ENCODE measurements at regions of chr22 and their contacts with region 1.

Region 1: DNA sequence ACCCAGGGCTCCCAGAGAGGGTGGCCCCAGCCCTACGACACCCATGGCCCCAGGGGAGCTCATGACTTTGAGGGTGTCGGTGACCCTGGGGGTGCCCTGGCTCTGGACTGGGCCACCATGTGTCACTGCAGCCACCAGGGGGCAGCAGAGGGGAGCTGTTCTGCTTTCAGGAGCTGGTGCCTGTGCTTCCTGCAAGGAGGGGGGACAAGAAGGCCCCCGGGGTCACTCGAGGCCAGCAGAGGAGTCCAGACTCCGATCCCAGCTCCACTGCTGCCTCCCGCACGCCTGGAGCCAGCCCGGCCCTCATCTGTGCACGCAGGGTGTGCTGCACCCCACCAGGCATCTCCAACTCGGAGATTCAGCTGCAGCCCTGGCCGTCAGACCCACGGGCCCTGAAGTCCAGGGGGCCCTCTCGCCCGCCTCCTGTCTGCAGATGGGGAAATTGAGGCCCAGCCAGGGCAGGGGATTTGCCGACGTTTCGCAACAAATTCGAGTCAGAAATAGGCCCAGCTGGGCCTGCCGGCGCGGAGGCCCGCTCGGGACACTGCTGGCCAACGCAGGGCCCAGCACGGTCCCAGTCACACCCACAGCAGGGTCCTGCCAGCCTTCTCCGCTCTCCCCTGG is 29.5 kb upstream of the WNT7B start:
- DNase-seq: peak; percentile 79
- ATAC-seq: peak; percentile 81
- H3K4me3 ChIP-seq: peak overlapping the region; percentile 24 to 73 (median 52); a peak in 5 of 6 replicates
- H3K27ac ChIP-seq: no peak overlapping the region
- H3K4me1 ChIP-seq: peaks cover 24% of the 10 kb centered on the region
- H3K27me3 ChIP-seq: peaks cover 4 to 16% of the 10 kb centered on the region in 2 experiments; a peak in 2 of 5 replicates
- CTCF ChIP-seq: peak; percentile 96
- EP300 ChIP-seq: no peak
- POLR2A ChIP-seq: no peak
- RAD21 ChIP-seq: peak; percentile 95

Region 2: DNA sequence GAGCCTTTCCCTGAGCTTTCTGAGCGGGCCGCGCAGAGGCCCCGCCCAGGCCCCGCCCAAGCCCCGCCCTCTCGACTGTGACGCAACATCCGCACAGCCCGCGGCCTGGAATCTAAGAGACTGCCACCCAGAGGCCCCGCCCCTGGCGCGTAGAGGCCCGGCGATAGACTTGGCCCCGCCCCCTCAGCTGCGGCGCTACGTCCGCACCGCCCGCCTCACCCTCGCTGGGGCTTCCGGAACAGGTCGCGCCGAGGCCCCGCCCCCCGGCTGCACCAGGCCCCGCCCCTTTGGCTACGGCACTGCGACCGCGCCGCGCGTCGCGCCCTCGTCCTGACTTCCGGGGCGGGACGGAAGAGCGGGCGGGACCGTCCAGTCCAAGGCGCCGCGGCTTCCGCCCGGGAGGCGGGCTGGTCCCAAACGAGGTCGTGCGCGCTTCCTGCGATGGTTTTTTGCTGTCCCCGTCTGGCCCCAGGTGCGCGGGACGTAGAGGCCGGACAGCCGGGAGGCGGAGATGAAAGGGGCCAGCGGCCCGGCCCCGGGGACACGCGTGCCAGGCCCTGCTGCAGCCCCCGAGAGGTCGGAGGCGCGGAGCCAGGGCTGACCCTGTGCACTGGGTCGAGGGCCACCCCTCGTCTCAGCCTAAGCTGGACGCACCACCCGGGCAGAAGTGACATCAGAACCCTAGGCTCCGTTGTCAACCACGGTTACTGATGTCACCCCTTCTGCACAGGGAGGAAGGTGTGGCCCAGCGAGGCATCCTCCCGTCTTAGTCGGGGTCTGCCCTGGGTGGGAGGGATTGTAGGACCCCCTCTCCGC is 29.5 kb after region 1 on chr22:
- CTCF ChIA-PET with region 1: interaction called, 4 read pairs
- POLR2A ChIA-PET with region 1: interaction called, 13 read pairs
- in situ Hi-C with region 1: no loop called
- intact Hi-C with region 1: loop called (anchors 1 kb)
- DNase-seq: peak; percentile 95
- ATAC-seq: peak; percentile 93
- H3K4me3 ChIP-seq: peak overlapping the region; percentile 64 to 85 (median 69)
- H3K27ac ChIP-seq: peak overlapping the region; percentile 69
- H3K4me1 ChIP-seq: peaks cover 39% of the 10 kb centered on the region
- H3K27me3 ChIP-seq: peaks cover 3 to 12% of the 10 kb centered on the region in 2 experiments; a peak in 3 of 5 replicates
- CTCF ChIP-seq: no peak
- EP300 ChIP-seq: peak in 1 of 2 experiments; percentile 7; a peak in 1 of 4 replicates
- POLR2A ChIP-seq: peak; percentile 71 to 86
- RAD21 ChIP-seq: no peak

Region 3: GRCh38 chr22:46116491-46116958 is 110.0 kb after region 1 on chr22:
- CTCF ChIA-PET with region 1: interaction called, 92 read pairs
- POLR2A ChIA-PET with region 1: interaction called, 7 read pairs
- in situ Hi-C with region 1: no loop called
- intact Hi-C with region 1: loop called (anchors 1 kb)
- DNase-seq: peak; percentile 74
- ATAC-seq: peak; percentile 81
- H3K4me3 ChIP-seq: no peak overlapping the region
- H3K27ac ChIP-seq: no peak overlapping the region
- H3K4me1 ChIP-seq: peaks cover 26% of the 10 kb centered on the region
- H3K27me3 ChIP-seq: peaks cover 2 to 46% of the 10 kb centered on the region in 2 experiments; a peak in 3 of 5 replicates
- CTCF ChIP-seq: peak; percentile 99
- EP300 ChIP-seq: no peak
- POLR2A ChIP-seq: no peak
- RAD21 ChIP-seq: peak; percentile 98

Measured in HepG2 (cell line).